Panc1 (cell line): ENCODE measurements at regions of chr4 and their contacts with region 1.

Region 1: GRCh38 chr4:103634236-103634635 is 85.5 kb downstream of the TACR3 start:
- DNase-seq: no peak
- ATAC-seq: no peak
- H3K4me3 ChIP-seq: no peak overlapping the region
- H3K27ac ChIP-seq: no peak overlapping the region
- H3K4me1 ChIP-seq: no peaks in the 10 kb centered on the region
- H3K27me3 ChIP-seq: no peaks in the 10 kb centered on the region
- CTCF ChIP-seq: no peak; the same call in 1 of the 2 replicates

Region 2: GRCh38 chr4:103732418-103732817 is 98.2 kb after region 1 on chr4:
- CTCF ChIA-PET with region 1: no interaction called
- POLR2A ChIA-PET with region 1: no interaction called
- in situ Hi-C with region 1: no loop called
- intact Hi-C with region 1: no loop called
- DNase-seq: no peak
- ATAC-seq: no peak
- H3K4me3 ChIP-seq: no peak overlapping the region
- H3K27ac ChIP-seq: no peak overlapping the region
- H3K4me1 ChIP-seq: no peaks in the 10 kb centered on the region
- H3K27me3 ChIP-seq: no peaks in the 10 kb centered on the region
- CTCF ChIP-seq: no peak

Region 3: DNA sequence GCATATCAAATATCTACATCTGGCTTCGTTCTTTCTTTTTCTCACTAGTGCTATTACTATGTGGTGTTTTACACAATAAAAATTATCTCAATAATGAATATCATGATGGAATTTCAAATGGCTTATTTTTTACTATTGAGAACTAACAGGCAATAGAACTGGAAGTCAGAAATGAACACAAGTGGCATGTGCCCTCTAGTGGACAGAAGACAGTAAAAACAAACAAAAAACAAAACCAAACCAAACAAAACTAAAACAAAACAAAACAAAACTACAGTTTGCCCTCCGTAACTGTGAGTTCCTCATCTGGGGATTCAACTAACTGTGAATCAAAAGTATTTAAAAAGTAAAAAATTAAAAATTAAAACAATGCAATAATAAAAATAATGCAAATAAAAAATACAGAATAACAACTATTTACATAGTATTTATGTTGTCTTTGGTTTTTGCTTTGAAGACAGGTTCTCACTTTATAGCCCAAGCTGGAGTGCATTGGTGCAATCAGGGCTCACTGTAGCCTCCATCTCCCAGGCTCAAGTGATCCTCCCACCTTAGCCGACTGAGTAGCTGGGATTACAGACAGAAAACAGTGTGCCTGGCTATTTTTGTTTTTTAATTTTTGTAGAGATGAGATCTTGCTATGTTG is 281.1 kb after region 1 on chr4:
- CTCF ChIA-PET with region 1: no interaction called
- POLR2A ChIA-PET with region 1: no interaction called
- in situ Hi-C with region 1: no loop called
- intact Hi-C with region 1: loop called (anchors 10 kb)
- DNase-seq: no peak
- ATAC-seq: no peak
- H3K4me3 ChIP-seq: no peak overlapping the region
- H3K27ac ChIP-seq: no peak overlapping the region
- H3K4me1 ChIP-seq: no peaks in the 10 kb centered on the region
- H3K27me3 ChIP-seq: no peaks in the 10 kb centered on the region
- CTCF ChIP-seq: peak; percentile 67